ENCODE measurements at regions of chr11 and their contacts with region 1.

Region 1: DNA sequence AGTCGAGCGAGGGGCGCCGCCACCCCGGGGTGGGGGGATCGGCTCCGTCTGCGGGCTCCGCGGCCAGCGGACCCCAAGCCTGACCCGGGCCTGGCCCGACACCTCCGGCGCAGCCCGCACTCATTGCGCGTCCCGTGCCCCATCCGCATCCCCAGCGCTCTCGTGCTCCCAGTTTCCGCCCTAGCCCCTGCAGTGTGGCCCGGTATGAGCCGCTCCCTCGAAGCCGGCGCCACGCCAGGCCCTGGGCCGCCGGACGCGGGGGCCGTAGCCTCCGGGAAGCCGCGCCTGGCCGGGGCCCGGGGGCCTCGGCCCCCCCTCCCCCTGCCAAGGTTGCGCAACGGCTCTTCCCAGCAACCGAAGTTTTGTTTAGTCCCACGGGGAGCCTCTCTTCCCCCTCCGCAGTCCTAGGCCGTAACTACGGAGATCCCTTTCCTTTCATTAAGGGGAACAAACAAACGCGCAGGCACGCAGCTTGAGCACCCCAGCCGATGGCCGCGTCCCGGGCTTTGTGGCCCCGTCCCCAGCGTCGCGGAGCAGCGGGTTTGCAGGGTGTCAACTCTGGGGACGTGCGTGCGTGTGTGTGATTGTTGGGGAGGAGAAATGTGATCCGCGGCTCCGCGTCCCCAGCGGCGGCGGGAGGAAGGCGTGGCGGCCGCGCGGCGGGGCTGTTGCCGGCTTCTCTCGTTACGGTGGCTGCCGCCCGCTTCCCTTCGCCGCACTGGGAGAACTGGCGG is 883 bp downstream of the HIPK3 start:
- DNase-seq: peak; percentile 93
- H3K4me3 Mint-ChIP-seq: peak overlapping the region; percentile 89
- H3K27ac Mint-ChIP-seq: peak overlapping the region; percentile 99
- H3K4me1 Mint-ChIP-seq: peaks cover 30% of the 10 kb centered on the region
- H3K27me3 Mint-ChIP-seq: no peaks in the 10 kb centered on the region

Region 2: GRCh38 chr11:32583459-32584271 is 674.4 kb before region 1 on chr11 and contains the start of gene EIF3M:
- intact Hi-C with region 1: loop called (anchors 5 kb)
- DNase-seq: peak; percentile 99
- H3K4me3 Mint-ChIP-seq: peak within 1 kb of the TSS; percentile 98
- H3K27ac Mint-ChIP-seq: peak within 1 kb of the TSS; percentile 98
- H3K4me1 Mint-ChIP-seq: peaks cover 25% of the 10 kb centered on the region
- H3K27me3 Mint-ChIP-seq: no peaks in the 10 kb centered on the region
- total RNA-seq, gene EIF3M: 348 and 351 TPM in 2 replicates

Region 3: DNA sequence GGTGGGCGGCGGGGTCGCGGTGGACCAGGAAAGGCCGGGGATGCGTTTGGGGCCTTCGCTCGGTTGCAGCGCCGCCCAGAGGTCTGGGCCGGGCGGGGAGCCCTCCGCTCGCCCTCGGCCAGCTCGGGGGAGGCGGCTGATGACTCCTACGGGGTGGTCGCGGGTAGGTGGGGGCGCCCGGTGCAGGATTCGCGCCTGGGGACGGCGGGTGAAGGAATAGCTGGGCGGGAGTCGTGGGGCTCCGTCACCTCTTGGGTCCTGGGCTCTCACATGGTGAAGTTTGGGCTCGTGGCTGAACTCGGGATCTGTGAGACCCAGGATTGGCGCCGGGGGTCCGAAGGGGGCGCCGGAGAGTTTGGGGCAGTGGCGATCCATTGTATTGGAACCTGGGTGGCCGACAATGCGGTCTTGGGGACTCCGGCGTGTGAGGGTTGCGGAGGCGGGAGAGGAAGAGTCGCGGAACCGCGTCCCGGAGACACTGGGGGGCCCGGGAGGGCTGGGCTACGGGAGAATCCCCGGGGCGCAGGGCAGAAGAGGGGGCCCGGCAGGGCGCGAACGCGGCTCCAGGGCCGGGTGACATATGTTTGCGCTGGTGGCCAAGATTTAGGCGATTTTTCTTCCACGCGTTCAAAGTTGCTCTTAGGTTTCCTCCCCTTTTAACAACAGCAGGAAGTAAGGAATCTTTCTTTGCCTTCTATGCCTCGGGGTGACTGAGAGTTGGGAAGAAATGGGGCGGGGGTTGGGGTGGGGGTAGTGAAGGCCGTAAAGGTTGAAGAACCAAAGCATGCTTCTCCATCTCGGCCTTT is 364.5 kb before region 1 on chr11:
- intact Hi-C with region 1: loop called (anchors 5 kb)
- DNase-seq: peak; percentile 82
- H3K4me3 Mint-ChIP-seq: peak overlapping the region; percentile 98
- H3K27ac Mint-ChIP-seq: peak overlapping the region; percentile 98
- H3K4me1 Mint-ChIP-seq: peaks cover 27% of the 10 kb centered on the region
- H3K27me3 Mint-ChIP-seq: peaks cover 10% of the 10 kb centered on the region

Region 4: GRCh38 chr11:33065445-33066178 is 192.5 kb before region 1 on chr11:
- intact Hi-C with region 1: loop called (anchors 10 kb)
- DNase-seq: peak; percentile 91
- H3K4me3 Mint-ChIP-seq: no peak overlapping the region
- H3K27ac Mint-ChIP-seq: no peak overlapping the region
- H3K4me1 Mint-ChIP-seq: peaks cover 32% of the 10 kb centered on the region
- H3K27me3 Mint-ChIP-seq: no peaks in the 10 kb centered on the region

Region 5: DNA sequence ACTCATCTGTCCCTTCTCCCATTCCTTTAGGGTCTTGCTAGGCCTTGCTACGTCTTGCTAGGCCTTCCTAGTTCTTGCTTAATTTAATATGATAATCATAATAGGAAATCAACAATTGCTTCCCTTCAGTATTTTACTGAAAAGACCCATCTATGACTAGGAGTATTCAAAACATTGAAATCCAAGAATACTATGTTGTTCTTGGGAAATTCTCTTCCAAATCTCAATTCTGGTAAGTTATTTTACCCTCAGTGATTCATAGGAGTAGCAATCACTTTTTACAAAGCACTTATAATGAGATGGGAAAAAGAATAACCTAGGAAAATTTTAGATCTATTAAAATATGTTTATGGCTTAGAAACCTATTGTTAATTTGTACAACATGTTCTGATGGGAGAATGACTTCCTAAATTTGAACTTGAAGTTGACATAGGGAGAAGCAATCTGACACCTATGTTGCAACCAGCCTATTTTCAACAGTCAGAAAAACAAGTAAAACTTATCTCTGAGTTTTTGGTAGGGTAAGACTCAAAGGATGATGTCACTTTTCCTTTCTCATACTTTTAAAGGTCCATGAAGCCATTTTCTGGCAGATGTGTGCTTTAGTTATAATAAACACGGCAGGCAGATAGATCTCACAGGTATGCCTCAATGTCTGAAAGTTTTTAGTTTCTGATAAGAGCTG is 30.3 kb before region 1 on chr11:
- intact Hi-C with region 1: no loop called
- DNase-seq: no peak
- H3K4me3 Mint-ChIP-seq: no peak overlapping the region
- H3K27ac Mint-ChIP-seq: no peak overlapping the region
- H3K4me1 Mint-ChIP-seq: no peaks in the 10 kb centered on the region
- H3K27me3 Mint-ChIP-seq: no peaks in the 10 kb centered on the region

Region 6: DNA sequence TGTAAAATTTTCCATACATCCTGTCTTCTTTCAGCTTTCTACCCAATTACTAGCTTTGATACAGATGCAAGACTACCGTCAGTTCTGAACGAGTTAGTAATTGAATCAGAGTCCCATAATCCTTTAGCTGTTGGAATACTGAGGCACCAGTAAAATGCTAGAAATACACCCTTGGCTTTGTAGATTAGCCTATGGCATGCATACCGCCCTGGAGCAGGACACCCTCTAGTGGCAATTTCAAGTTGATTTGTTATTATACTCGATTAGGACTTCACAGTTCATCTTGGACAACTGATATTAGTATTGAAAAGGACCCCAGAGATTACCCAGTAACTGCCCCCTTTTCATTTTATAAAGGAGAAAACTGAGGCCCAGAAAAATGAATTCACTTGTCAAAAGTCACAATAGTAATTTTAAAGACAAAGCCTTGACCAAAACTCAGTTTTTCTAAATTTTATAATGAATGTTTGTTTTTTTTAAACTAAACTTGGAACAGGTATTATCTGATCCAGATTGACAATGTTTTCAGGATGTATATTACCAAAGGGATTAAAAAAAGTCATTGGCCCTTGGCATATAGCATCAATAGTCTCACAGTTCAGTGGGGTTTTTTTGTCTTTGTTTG is 71.8 kb after region 1 on chr11:
- intact Hi-C with region 1: loop called (anchors 2 kb)
- DNase-seq: peak; percentile 80
- H3K4me3 Mint-ChIP-seq: no peak overlapping the region
- H3K27ac Mint-ChIP-seq: no peak overlapping the region
- H3K4me1 Mint-ChIP-seq: peaks cover 4% of the 10 kb centered on the region
- H3K27me3 Mint-ChIP-seq: no peaks in the 10 kb centered on the region

Region 7: DNA sequence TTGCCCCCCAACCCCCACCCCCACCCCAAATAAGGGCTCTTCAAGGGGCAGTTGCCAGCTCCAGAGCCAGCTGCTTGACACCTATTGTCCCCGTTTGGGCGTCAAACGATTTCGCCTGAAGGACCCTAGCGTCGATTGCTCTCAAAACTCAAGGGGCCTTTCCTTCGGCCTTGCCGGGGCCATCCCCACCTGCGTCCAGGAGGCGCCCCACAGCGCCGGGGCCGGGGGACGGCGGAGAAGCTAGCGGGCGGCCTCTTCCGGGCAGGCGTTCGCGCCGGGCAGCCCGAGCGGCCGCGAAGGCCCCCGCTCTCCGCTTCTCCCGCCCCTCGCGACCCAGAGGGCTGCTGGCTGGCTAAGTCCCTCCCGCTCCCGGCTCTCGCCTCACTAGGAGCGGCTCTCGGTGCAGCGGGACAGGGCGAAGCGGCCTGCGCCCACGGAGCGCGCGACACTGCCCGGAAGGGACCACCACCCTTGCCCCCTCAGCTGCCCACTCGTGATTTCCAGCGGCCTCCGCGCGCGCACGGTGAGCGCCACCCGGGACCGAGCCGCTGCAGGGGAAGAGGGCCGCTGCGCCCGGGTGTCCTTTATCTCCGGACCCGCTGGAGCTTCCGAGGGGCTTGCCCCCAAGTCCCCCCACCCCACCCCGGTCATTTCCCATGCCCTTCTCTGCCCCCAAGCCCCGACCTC is 793.4 kb after region 1 on chr11 and contains the start of gene CAPRIN1:
- intact Hi-C with region 1: loop called (anchors 5 kb)
- DNase-seq: peak; percentile 95
- H3K4me3 Mint-ChIP-seq: peak within 1 kb of the TSS; percentile 100
- H3K27ac Mint-ChIP-seq: peak within 1 kb of the TSS; percentile 99
- H3K4me1 Mint-ChIP-seq: peaks cover 14% of the 10 kb centered on the region
- H3K27me3 Mint-ChIP-seq: peaks cover 5% of the 10 kb centered on the region
- total RNA-seq, gene CAPRIN1: 318 and 321 TPM in 2 replicates

Measured in activated CD4-positive, alpha-beta T cell treated with anti-CD3 and anti-CD28 coated beads, Interleukin-2, amount 10 ng/mL, durations not matched to agents 24 days and 14 days (primary cell).